Sigmoid colon (tissue), 7 donors: ENCODE measurements at regions of chr19 and their contacts with region 1.

Region 1: DNA sequence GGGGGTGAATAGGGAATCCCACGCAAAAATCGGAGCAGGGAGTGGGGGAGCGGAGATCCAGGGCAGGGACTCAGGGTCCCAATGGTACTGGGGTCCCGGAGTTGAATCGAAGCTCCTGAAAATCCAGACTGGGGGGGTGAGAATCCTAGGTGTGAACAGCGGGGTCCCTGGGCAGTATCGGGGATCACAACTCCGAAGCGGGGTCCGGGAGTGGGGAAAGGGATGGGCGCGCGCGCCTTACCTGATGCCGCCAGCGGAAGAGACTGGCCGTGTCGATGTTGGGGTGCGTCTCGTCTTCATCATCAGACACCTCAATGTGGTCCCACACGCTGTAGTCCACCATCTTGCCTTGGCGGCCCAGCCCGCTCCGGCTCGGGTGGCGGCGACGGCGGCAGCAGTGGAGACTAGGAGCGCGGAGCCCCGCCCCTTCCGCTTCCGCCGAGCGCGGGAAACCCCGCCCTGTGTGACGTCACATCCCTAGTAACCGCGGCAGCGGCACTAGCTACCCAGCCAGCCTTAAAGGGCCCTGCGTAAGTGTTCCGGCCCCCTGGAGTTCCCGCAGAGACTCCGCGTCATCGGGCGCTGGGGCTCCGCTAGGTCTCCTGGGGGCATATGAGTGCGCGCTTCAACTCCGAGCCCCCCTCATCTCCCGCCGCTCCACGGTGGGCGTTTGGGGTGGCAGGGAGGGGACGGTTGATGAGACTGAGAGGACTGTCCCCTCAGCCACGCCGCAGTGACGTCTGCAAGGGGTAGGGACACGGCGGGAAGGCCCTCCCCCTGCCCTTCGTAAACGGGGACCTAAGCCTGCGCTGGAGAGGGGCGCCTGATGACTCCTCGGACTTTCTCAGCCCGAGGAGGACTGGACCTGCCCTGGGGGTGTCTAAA is at the start of gene CDC37:
- DNase-seq: peak; percentile 98
- H3K4me3 ChIP-seq: peak within 1 kb of the TSS; percentile 70 to 97 (median 93)
- H3K27ac ChIP-seq: peak within 1 kb of the TSS; percentile 79 to 90 (median 82)
- H3K4me1 ChIP-seq: peaks cover 0 to 44% (median 36%) of the 10 kb centered on the region in 4 donors
- H3K27me3 ChIP-seq: peaks cover 6 to 38% (median 31%) of the 10 kb centered on the region in 3 donors
- CTCF ChIP-seq: no peak
- EP300 ChIP-seq: peak in 1 of 4 donors; percentile 5
- POLR2A ChIP-seq: peak; percentile 68 to 79
- total RNA-seq, gene CDC37: 106 to 144 (median 118) TPM

Region 2: DNA sequence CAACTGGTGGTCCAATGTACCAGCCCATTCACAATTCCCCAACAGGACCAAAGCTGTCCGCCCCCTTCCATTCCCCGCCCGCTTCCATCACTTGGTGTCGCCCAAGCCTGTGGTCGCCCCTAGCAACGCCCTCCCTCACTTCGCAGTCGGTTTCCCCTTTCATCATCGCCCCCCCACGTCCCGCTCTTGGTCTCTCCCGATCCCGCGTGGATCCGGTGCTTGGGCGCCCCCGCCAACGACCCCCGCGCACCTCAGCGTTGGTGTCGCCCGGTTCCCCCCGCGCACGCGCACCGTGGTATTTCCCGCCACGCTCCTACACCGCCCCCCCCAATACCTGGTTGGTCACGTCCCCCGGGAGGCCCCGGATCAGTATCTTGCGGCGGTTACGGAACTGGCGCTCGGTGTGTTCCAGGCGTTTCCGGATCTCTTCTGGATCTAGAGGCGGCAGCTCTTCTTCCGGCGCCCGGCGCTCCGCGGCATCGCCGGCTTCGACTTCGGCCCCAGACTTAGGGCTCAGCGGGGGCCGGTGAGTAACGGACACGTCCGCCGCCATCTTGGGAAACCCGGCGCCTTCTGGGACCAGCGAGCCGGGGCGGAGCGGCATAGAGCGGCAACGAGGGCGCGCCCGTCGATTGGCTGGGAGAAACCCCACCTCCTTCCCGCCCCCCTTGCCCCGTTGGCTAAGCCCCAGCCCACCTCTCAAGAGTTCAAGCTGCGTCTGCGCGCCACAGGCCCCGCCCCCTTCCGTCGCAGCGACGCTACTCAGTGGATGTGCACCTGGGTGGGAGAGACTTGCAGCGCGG is 70.2 kb before region 1 on chr19 and contains the start of gene RAVER1:
- intact Hi-C with region 1: loop called (anchors 5 kb)
- DNase-seq: peak; percentile 99
- H3K4me3 ChIP-seq: peak within 1 kb of the TSS; percentile 59 to 76 (median 68)
- H3K27ac ChIP-seq: peak within 1 kb of the TSS; percentile 84 to 95 (median 91)
- H3K4me1 ChIP-seq: peaks cover 0 to 33% (median 27%) of the 10 kb centered on the region in 4 donors
- H3K27me3 ChIP-seq: no peaks in the 10 kb centered on the region
- CTCF ChIP-seq: no peak
- EP300 ChIP-seq: no peak
- POLR2A ChIP-seq: peak; percentile 56 to 69
- total RNA-seq, gene RAVER1: 10.0 to 28.5 (median 14.9) TPM

Region 3: DNA sequence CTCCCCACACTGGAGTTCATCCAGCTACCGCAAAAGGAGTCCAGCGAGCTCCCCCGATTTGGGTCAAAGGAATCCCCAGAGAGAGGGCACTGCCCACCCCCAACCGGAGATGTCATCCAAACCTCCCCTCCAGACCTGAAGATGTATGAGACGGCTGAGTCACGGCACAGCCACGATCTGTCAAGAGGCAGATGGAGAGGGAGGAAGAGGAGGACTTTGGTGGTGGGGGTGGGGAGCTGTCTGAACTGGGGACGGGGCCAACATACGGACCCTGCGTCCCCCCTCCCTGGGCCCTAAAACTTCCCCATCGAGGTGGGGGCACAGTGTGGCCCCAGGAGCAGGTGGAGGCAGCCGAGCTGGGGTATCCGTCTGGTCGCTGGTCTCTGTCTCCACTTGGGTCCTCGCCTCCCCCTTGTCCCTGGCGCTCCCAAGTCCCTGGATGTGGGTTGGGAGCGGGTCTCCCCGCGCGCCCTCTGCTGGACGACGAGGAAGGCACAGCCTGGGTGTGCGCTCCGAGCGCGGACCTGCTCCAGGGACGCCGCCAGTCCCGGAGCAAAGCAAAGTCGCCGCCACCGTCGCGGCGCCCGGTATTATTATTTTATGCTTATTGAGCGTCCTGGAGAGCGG is 20.7 kb after region 1 on chr19:
- intact Hi-C with region 1: loop called (anchors 2 kb)
- DNase-seq: peak; percentile 87
- H3K4me3 ChIP-seq: peak overlapping the region; percentile 6 to 27 (median 16)
- H3K27ac ChIP-seq: peak overlapping the region in 1 of 4 donors; percentile 19
- H3K4me1 ChIP-seq: peaks cover 0 to 36% (median 33%) of the 10 kb centered on the region in 4 donors
- H3K27me3 ChIP-seq: peaks cover 55 to 65% (median 62%) of the 10 kb centered on the region in 3 donors
- CTCF ChIP-seq: peak; percentile 66 to 93 (median 70)
- EP300 ChIP-seq: no peak
- POLR2A ChIP-seq: no peak

Region 4: DNA sequence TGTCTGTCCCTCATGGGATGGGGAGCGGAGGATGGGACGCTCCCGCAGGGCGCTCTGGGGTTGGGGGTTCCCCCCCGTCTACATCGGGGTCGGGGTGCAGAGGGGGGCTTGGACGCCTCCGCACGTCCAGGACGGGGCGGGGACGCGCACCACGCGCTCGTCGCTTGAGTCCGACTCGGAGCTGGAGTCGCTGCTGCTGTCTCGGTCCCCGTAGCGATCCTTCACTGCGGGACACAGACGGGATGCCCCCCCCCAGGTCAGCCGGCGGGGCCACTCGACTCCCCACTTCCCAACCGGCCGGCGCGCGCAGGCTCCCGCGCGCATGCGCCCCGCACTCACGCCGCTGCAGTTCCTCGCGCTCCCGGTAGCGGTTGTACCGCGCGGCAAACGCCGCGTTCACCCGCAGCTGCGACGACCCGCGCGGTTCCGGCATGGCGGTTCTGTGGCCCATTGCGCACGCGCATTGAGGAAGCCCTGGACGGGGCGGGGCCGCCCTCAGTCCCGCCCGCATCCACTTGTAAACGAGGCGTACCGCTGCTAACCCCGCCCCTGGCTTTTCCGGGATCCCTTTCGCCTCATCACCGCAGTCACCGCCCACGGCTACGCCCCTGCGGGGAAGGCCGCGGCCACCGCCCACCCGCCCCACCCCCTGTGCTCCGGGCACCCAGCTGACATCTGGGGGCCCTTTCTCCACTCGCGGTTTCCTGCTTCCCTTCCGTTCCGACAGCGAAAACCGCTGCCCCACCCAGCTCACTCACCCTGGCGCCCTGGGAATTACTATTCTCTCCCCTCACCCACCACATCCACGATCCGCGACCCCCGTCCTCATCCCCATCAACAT is 162.4 kb after region 1 on chr19 and contains the start of gene KRI1:
- intact Hi-C with region 1: loop called (anchors 5 kb)
- DNase-seq: peak; percentile 99
- H3K4me3 ChIP-seq: peak within 1 kb of the TSS; percentile 61 to 95 (median 84)
- H3K27ac ChIP-seq: peak within 1 kb of the TSS; percentile 82 to 94 (median 90)
- H3K4me1 ChIP-seq: peaks cover 0 to 46% (median 39%) of the 10 kb centered on the region in 4 donors
- H3K27me3 ChIP-seq: no peaks in the 10 kb centered on the region
- CTCF ChIP-seq: peak in 1 of 4 experiments; percentile 39
- EP300 ChIP-seq: peak in 1 of 4 donors; percentile 40
- POLR2A ChIP-seq: peak; percentile 77 to 83
- total RNA-seq, gene KRI1: 13.6 to 21.1 (median 16.1) TPM

Region 5: DNA sequence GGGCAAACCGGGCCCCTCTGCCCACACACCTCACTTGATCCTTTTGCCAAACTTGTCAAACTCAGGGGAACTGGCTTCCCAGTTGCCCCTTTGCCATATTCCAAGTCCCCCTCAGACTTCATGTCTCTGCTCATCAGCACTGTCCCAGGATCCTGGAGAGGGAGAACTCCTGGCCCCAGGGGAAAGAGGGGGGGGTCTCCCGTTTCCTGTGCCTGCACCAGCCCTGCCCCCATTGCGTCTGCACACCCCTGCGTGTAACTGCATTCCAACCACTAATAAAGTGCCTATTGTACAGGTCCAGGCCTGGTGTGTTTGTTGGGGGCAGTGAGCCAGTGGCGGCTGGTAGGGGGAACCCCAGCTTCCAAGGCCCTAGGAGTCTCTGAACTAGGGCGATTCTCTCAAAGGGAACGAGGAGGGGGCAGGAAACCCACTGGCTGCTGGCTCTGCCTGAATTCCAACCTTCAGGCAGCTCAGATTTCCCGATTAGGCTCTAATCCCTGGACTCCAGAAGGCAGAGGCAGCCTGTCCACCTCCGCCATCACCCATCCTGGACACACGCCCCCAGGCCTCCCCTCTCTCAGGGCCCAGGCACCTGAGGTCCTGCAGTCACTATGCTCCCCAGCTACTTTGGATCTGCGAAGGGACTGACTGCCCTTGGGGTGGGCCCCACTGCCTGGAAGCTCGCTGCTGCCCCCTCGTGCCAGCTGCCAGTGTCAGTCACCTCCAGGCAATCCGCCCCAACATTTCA is 241.1 kb after region 1 on chr19:
- intact Hi-C with region 1: loop called (anchors 10 kb)
- DNase-seq: peak; percentile 92
- H3K4me3 ChIP-seq: no peak overlapping the region
- H3K27ac ChIP-seq: peak overlapping the region; percentile 13 to 60 (median 33)
- H3K4me1 ChIP-seq: peaks cover 0 to 12% (median 8%) of the 10 kb centered on the region in 4 donors
- H3K27me3 ChIP-seq: no peaks in the 10 kb centered on the region
- CTCF ChIP-seq: peak; percentile 76 to 93 (median 82)
- EP300 ChIP-seq: no peak
- POLR2A ChIP-seq: no peak